AG04449 (cell line): ENCODE measurements at regions of chr3 and their contacts with region 1.

Region 1: DNA sequence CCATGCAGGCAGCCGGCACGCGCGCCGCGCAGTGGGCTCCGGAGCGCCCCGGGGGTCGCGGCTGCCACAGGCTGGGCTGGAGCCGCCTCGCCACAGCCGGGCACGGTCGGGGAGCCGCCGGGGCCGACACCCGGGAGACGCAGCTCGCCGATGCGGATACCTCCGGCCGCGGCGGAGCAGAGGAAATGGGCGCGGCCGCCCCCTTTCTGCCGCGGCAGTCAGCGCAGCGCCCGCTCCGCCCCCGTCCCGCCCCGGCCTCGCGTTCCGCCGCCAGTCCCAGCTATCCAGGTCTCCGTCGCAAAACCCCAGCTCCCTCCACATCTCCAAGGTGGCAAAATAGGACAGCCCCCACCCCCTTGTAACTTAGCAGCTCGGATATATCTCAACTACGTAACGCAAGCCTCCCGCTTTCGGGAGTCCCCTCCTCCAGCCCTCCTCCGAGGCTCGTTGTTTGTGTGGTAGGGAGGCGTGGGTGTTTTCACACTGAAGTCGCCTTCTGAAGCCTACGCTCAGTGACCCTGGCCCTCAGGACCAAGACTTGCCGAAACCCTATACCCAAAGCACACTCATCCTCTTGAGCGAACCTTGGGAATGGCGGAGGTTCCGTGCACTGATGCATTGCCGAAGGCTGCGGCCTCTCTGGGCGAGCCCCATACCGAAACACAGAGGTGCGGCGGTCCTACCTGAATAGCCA is at the start of gene SH3BP5:
- DNase-seq: no peak
- H3K4me3 ChIP-seq: peak within 1 kb of the TSS; percentile 90
- CTCF ChIP-seq: peak; percentile 75

Region 2: GRCh38 chr3:15319575-15319974 is 13.0 kb before region 1 on chr3:
- CTCF ChIA-PET with region 1: interaction called, 23 read pairs
- POLR2A ChIA-PET with region 1: interaction called, 10 read pairs
- DNase-seq: no peak
- H3K4me3 ChIP-seq: no peak overlapping the region
- CTCF ChIP-seq: no peak

Region 3: DNA sequence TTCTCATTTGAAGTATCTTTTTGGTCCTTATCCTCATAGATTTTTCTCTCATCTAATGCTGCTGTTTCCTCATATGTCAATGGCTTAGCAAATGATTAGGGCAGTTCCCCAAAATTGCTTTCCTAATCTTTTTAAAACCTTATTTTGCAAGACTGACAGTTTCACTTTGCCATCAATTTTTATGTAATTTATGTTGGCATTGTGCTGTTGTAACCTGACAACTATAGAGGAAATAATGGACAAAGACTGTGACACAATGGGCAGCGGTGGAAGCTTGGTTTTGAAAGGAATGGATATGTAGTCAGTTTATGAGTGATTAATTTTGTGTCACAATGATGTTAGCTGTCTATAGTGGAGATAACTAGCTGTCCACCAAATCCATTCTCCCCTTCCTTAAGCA is 10.4 kb after region 1 on chr3:
- CTCF ChIA-PET with region 1: interaction called, 25 read pairs
- POLR2A ChIA-PET with region 1: no interaction called
- DNase-seq: no peak
- H3K4me3 ChIP-seq: no peak overlapping the region
- CTCF ChIP-seq: no peak

Region 4: GRCh38 chr3:15645736-15646501 is 313.4 kb after region 1 on chr3:
- CTCF ChIA-PET with region 1: no interaction called
- POLR2A ChIA-PET with region 1: no interaction called
- DNase-seq: peak; percentile 80
- H3K4me3 ChIP-seq: no peak overlapping the region
- CTCF ChIP-seq: no peak